ENCODE measurements at regions of chr16 and their contacts with region 1.

Region 1: GRCh38 chr16:88452482-88453216 is 431 bp upstream of the ZFPM1 start:
- DNase-seq: peak; percentile 95 to 100 (median 98)
- ATAC-seq: peak; percentile 90
- H3K4me3 ChIP-seq: peak overlapping the region; percentile 61
- H3K4me3 Mint-ChIP-seq: peak overlapping the region; percentile 81 to 94 (median 84)
- H3K27ac ChIP-seq: peak overlapping the region; percentile 80
- H3K27ac Mint-ChIP-seq: peak overlapping the region; percentile 67 to 95 (median 87)
- H3K4me1 ChIP-seq: peaks cover 20 to 28% of the 10 kb centered on the region in 2 donors
- H3K4me1 Mint-ChIP-seq: peaks cover 19 to 29% (median 26%) of the 10 kb centered on the region in 7 donors
- H3K27me3 ChIP-seq: no peaks in the 10 kb centered on the region
- H3K27me3 Mint-ChIP-seq: peaks cover 0 to 9% (median 0%) of the 10 kb centered on the region in 5 donors

Region 2: GRCh38 chr16:88468275-88469141 is 15.9 kb after region 1 on chr16:
- CTCF ChIA-PET with region 1: no interaction called
- POLR2A ChIA-PET with region 1: interaction called, 11 read pairs
- intact Hi-C with region 1: loop called in 1 of 2 experiments (anchors 1 kb)
- DNase-seq: no peak
- ATAC-seq: peak; percentile 33
- H3K4me3 ChIP-seq: no peak overlapping the region
- H3K4me3 Mint-ChIP-seq: peak overlapping the region in 4 of 10 donors; percentile 6 to 74 (median 35)
- H3K27ac ChIP-seq: peak overlapping the region; percentile 72
- H3K27ac Mint-ChIP-seq: peak overlapping the region in 8 of 9 donors; percentile 40 to 99 (median 92)
- H3K4me1 ChIP-seq: peaks cover 49 to 73% of the 10 kb centered on the region in 2 donors
- H3K4me1 Mint-ChIP-seq: peaks cover 20 to 80% (median 55%) of the 10 kb centered on the region in 7 donors
- H3K27me3 ChIP-seq: no peaks in the 10 kb centered on the region
- H3K27me3 Mint-ChIP-seq: no peaks in the 10 kb centered on the region

Region 3: GRCh38 chr16:88533932-88534732 is 81.5 kb after region 1 on chr16:
- CTCF ChIA-PET with region 1: no interaction called
- POLR2A ChIA-PET with region 1: interaction called, 3 read pairs
- intact Hi-C with region 1: loop called in 1 of 2 experiments (anchors 1 kb)
- DNase-seq: peak; percentile 45 to 87 (median 77)
- ATAC-seq: peak; percentile 89
- H3K4me3 ChIP-seq: peak overlapping the region; percentile 30
- H3K4me3 Mint-ChIP-seq: peak overlapping the region in 7 of 10 donors; percentile 23 to 87 (median 55)
- H3K27ac ChIP-seq: peak overlapping the region; percentile 80
- H3K27ac Mint-ChIP-seq: peak overlapping the region in 3 of 9 donors; percentile 53 to 79 (median 72)
- H3K4me1 ChIP-seq: peaks cover 0 to 9% of the 10 kb centered on the region in 2 donors
- H3K4me1 Mint-ChIP-seq: peaks cover 9 to 16% (median 13%) of the 10 kb centered on the region in 7 donors
- H3K27me3 ChIP-seq: no peaks in the 10 kb centered on the region
- H3K27me3 Mint-ChIP-seq: peaks cover 0 to 8% (median 0%) of the 10 kb centered on the region in 5 donors

Region 4: DNA sequence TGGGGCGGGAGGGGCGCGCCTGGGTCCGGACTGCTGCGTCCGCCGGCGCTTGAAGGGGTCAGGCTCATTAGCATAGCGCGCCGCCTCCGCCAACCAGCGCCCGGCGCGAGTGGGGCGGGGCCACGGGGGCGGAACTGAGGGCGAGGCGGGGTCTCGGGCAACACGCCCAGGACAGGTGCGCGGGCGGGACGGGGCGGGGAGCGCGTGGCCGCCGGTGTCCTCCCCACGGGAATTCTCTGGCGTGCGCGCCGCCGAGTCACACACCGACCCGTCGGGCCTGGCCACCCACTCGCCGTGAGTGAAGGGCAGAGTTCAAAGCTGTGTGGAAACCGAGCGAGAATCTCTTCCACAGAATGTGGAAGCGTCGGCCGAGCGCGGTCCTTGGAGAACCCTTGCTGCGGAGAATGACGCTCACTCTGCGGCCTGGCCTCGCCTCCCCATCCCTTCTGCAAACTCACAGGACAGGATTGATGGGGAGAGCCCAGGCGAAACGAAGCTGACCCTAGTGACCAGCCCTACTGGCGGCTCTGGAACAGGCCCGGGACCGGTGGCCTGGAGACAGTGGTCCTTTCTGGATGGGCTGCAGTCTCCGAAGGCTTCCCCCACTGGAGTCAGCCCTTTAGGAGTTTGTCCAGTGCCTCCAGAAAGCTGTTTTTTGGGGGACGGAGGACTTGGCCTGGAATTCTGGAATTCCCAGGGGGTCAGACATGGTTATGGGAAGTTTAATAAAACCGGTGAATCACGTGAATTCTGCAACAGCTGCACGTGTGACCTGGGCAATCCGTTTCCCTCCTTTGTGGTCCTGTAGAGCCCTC is 234.0 kb after region 1 on chr16 and contains the start of gene SNAI3:
- CTCF ChIA-PET with region 1: no interaction called
- POLR2A ChIA-PET with region 1: no interaction called
- intact Hi-C with region 1: loop called (anchors 2 to 10 kb)
- DNase-seq: peak; percentile 69 to 96 (median 80)
- ATAC-seq: peak; percentile 91
- H3K4me3 ChIP-seq: peak within 1 kb of the TSS; percentile 85
- H3K4me3 Mint-ChIP-seq: peak within 1 kb of the TSS; percentile 72 to 87 (median 81)
- H3K27ac ChIP-seq: peak within 1 kb of the TSS; percentile 77
- H3K27ac Mint-ChIP-seq: peak within 1 kb of the TSS in 8 of 9 donors; percentile 6 to 81 (median 63)
- H3K4me1 ChIP-seq: peaks cover 21 to 48% of the 10 kb centered on the region in 2 donors
- H3K4me1 Mint-ChIP-seq: peaks cover 23 to 76% (median 59%) of the 10 kb centered on the region in 7 donors
- H3K27me3 ChIP-seq: no peaks in the 10 kb centered on the region
- H3K27me3 Mint-ChIP-seq: no peaks in the 10 kb centered on the region
- total RNA-seq, gene SNAI3: 2.7 to 13.0 (median 6.1) TPM

Region 5: DNA sequence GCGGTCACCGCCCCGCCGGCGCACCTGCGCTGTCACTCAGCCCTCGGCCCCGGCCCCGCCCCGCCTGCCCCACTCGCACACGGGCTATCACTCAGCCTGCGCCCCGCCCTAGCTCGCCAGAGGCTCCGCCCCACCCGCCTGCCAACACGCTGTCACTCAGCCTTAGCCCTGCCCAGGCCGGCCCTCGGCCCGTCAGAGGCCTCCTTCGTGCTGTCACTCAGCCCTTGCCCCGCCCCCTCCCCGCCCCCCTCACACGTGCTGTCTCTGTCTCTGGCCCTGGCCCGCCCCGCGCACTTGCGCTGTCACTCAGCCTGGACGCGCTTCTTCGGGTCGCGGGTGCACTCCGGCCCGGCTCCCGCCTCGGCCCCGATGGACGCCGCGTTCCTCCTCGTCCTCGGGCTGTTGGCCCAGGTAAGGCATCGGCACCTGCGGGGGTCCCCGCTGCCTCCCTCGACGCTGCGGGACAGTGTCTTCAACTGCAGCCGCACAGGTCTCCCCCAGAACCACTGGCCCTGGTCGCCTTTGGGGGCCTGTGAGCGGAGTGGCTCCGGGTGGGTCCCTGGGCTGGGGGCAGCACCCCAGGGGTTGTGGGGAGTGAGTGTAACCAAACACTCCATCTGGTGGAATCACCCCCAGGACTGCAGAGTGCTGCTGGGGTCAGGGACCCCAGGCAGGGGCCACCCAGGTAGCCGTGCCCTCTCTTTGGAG is 719.0 kb after region 1 on chr16 and contains the start of gene CDH15:
- CTCF ChIA-PET with region 1: no interaction called
- POLR2A ChIA-PET with region 1: no interaction called
- intact Hi-C with region 1: loop called in 1 of 2 experiments (anchors 10 kb)
- DNase-seq: peak; percentile 79 to 96 (median 91)
- ATAC-seq: peak; percentile 97
- H3K4me3 ChIP-seq: peak within 1 kb of the TSS; percentile 51
- H3K4me3 Mint-ChIP-seq: peak within 1 kb of the TSS; percentile 65 to 88 (median 76)
- H3K27ac ChIP-seq: no peak within 1 kb of the TSS
- H3K27ac Mint-ChIP-seq: peak within 1 kb of the TSS in 5 of 9 donors; percentile 51 to 86 (median 75)
- H3K4me1 ChIP-seq: peaks cover 8 to 21% of the 10 kb centered on the region in 2 donors
- H3K4me1 Mint-ChIP-seq: peaks cover 6 to 10% (median 7%) of the 10 kb centered on the region in 7 donors
- H3K27me3 ChIP-seq: no peaks in the 10 kb centered on the region
- H3K27me3 Mint-ChIP-seq: peaks cover 0 to 6% (median 0%) of the 10 kb centered on the region in 5 donors
- total RNA-seq, gene CDH15: not detected